GM12878 (cell line): ENCODE measurements at regions of chr7 and their contacts with region 1.

Region 1: GRCh38 chr7:27774717-27775328 is 34.9 kb downstream of the TAX1BP1 start:
- DNase-seq: no peak
- ATAC-seq: peak; percentile 52; the same call in 1 of the 3 replicates
- H3K4me3 ChIP-seq: no peak overlapping the region
- H3K27ac ChIP-seq: no peak overlapping the region
- H3K4me1 ChIP-seq: no peaks in the 10 kb centered on the region
- H3K27me3 ChIP-seq: no peaks in the 10 kb centered on the region
- CTCF ChIP-seq: peak; percentile 57 to 61 (median 57); a peak in 5 of 6 replicates
- EP300 ChIP-seq: no peak
- POLR2A ChIP-seq: no peak
- RAD21 ChIP-seq: peak; percentile 50

Region 2: DNA sequence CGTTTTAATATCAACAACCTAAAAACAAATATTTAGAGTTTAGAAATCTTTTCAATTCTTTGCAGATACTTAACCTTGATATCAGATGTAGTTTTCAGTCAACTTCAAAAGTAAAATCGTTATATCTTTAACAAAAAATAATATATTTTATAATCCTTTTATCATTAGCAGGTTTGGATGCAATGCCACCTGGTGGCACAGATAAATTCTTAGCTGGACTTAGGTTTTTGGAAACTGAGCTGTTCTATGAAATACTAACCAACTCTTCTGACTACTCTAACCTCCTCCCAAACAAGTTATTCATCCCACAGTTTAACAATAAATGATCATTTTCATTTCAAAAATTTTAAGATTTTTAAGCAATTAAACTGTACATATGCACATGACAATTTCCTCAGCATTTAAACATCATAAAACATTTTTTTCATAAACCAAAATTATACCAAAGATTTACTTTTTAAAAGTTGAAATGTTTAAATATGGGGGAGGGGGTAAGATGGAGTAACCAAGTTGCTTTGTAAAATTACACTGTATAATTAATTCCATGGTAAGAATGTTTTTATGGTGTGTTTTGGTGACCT is 169.0 kb before region 1 on chr7:
- CTCF ChIA-PET with region 1: interaction called, 17 read pairs
- POLR2A ChIA-PET with region 1: no interaction called
- RAD21 ChIA-PET with region 1: interaction called, 12 read pairs
- SMC1A ChIA-PET with region 1: interaction called, 7 read pairs
- in situ Hi-C with region 1: no loop called
- intact Hi-C with region 1: no loop called
- DNase-seq: no peak
- ATAC-seq: no peak
- H3K4me3 ChIP-seq: no peak overlapping the region
- H3K27ac ChIP-seq: no peak overlapping the region
- H3K4me1 ChIP-seq: no peaks in the 10 kb centered on the region
- H3K27me3 ChIP-seq: no peaks in the 10 kb centered on the region
- CTCF ChIP-seq: peak in 2 of 3 experiments; percentile 33 to 44; a peak in 4 of 6 replicates
- EP300 ChIP-seq: no peak
- POLR2A ChIP-seq: no peak
- RAD21 ChIP-seq: peak; percentile 30

Region 3: DNA sequence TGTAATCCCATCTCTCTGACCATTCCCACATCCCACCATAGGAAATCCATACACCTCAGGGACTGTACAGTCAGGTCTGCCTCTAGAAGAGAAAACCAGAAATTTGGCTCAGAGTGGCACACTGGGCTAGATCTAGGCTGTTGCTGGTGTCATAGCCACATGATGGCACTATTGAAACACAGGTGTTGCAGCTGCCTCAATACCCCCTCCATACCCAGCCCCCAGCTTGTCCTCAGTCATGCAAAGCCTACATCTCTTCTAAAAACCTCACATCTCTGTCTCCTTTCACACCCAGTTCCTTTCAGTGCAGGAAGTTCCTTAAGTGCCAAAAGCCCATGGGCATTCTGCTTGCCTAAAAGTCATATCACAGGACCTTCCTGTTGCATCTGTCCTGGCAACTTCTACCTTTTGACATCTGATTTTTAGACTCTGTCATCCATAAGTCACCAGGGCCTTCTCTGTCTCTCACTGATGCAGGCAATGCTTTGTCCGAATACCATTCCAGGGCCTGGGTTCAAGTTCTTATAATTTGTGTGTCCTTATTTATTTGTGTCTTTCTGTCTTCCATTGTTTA is 85.1 kb before region 1 on chr7:
- CTCF ChIA-PET with region 1: interaction called, 20 read pairs
- POLR2A ChIA-PET with region 1: no interaction called
- RAD21 ChIA-PET with region 1: interaction called, 13 read pairs
- SMC1A ChIA-PET with region 1: interaction called, 17 read pairs
- in situ Hi-C with region 1: no loop called
- intact Hi-C with region 1: loop called (anchors 2 kb)
- DNase-seq: no peak
- ATAC-seq: peak; percentile 83
- H3K4me3 ChIP-seq: no peak overlapping the region
- H3K27ac ChIP-seq: no peak overlapping the region
- H3K4me1 ChIP-seq: no peaks in the 10 kb centered on the region
- H3K27me3 ChIP-seq: no peaks in the 10 kb centered on the region
- CTCF ChIP-seq: peak; percentile 42 to 69 (median 43); a peak in 5 of 6 replicates
- EP300 ChIP-seq: no peak
- POLR2A ChIP-seq: no peak
- RAD21 ChIP-seq: peak; percentile 53

Region 4: DNA sequence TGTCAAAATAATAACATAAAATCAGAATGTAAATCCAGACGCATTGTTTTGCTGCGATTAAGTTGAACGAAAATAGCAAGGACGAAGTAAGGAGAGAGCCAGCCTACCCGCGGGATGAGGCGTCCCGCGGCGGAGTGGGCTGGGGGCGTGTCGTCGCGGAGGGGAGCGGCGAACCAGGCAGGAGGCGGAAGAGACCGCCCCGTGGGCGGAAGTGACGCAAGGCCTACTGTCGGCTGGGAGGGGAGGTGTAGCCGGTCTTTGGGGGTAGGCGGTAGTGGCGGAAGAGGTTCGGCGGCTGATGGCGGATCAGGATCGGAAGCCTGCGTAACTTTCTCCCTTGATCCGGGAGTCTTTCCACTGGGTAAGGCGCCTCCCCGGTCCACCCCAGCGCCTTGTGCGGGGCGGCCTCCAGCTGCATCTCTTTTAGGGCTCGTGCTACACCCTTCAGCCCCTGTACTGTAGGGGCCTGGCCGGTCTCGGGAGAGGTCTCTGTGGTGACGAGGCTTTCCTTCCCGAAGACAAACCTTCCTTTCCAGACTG is 34.8 kb before region 1 on chr7 and contains the start of gene TAX1BP1:
- CTCF ChIA-PET with region 1: interaction called, 32 read pairs
- POLR2A ChIA-PET with region 1: no interaction called
- RAD21 ChIA-PET with region 1: interaction called, 15 read pairs
- SMC1A ChIA-PET with region 1: interaction called, 33 read pairs
- in situ Hi-C with region 1: no loop called
- intact Hi-C with region 1: no loop called
- DNase-seq: peak; percentile 70
- ATAC-seq: peak; percentile 95
- H3K4me3 ChIP-seq: peak within 1 kb of the TSS; percentile 100
- H3K27ac ChIP-seq: peak within 1 kb of the TSS; percentile 96
- H3K4me1 ChIP-seq: no peaks in the 10 kb centered on the region
- H3K27me3 ChIP-seq: no peaks in the 10 kb centered on the region
- CTCF ChIP-seq: no peak
- EP300 ChIP-seq: no peak
- POLR2A ChIP-seq: peak; percentile 85
- RAD21 ChIP-seq: no peak
- polyA plus RNA-seq, gene TAX1BP1: 52.9 to 88.4 TPM

Region 5: GRCh38 chr7:27850531-27850930 is 75.7 kb after region 1 on chr7:
- CTCF ChIA-PET with region 1: no interaction called
- POLR2A ChIA-PET with region 1: no interaction called
- RAD21 ChIA-PET with region 1: no interaction called
- SMC1A ChIA-PET with region 1: no interaction called
- in situ Hi-C with region 1: no loop called
- intact Hi-C with region 1: no loop called
- DNase-seq: no peak
- ATAC-seq: no peak
- H3K4me3 ChIP-seq: no peak overlapping the region
- H3K27ac ChIP-seq: no peak overlapping the region
- H3K4me1 ChIP-seq: no peaks in the 10 kb centered on the region
- H3K27me3 ChIP-seq: no peaks in the 10 kb centered on the region
- CTCF ChIP-seq: no peak
- EP300 ChIP-seq: no peak
- POLR2A ChIP-seq: no peak
- RAD21 ChIP-seq: no peak

Region 6: GRCh38 chr7:27952456-27953285 is 177.8 kb after region 1 on chr7:
- CTCF ChIA-PET with region 1: no interaction called
- POLR2A ChIA-PET with region 1: no interaction called
- RAD21 ChIA-PET with region 1: no interaction called
- SMC1A ChIA-PET with region 1: no interaction called
- in situ Hi-C with region 1: no loop called
- intact Hi-C with region 1: no loop called
- DNase-seq: no peak
- ATAC-seq: no peak
- H3K4me3 ChIP-seq: no peak overlapping the region
- H3K27ac ChIP-seq: no peak overlapping the region
- H3K4me1 ChIP-seq: no peaks in the 10 kb centered on the region
- H3K27me3 ChIP-seq: peaks cover 3% of the 10 kb centered on the region in 2 experiments; a peak in 3 of 4 replicates
- CTCF ChIP-seq: no peak
- EP300 ChIP-seq: no peak
- POLR2A ChIP-seq: no peak
- RAD21 ChIP-seq: no peak